Left cardiac atrium (tissue), 4 donors: ENCODE measurements at regions of chr3 and their contacts with region 1.

Region 1: DNA sequence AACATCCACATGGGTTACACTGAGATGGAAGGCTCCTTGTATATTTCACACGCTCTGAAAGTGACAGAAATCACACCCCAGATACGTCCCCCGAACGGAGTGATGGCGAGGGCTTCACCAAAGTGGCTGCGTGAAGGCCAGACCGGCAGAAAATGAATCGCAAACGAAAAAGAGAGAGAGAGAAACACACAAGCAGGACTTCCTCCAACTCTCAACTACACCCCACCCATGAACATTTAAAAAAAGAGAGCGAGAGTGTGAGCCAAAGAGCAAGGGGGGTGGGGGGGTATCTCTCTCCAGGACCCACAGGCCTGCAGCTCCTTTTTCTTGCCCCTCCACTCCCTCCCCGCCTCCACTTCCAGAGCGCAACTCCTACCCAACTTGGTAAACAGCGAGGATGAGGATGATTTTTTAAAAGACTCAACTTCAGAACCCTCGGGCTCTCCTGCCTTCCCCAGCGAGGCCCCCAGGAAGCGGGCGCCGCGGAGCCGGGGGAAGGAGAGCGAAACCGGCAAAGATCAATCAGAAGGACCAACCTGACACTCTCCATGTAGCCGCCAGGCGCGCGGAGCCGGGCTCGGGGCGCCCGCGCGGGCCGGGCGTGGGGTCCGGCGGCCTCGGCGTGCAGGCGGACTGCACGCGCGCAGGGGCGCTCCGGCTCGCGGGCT is 519.1 kb downstream of the FOXP1 start:
- DNase-seq: no peak
- ATAC-seq: peak; percentile 60 to 62

Region 2: GRCh38 chr3:70899816-70900215 is 164.6 kb before region 1 on chr3:
- intact Hi-C with region 1: no loop called
- DNase-seq: no peak
- ATAC-seq: no peak

Region 3: GRCh38 chr3:71130471-71131374 is 66.3 kb after region 1 on chr3:
- intact Hi-C with region 1: loop called in 1 of 2 experiments (anchors 5 kb)
- DNase-seq: peak; percentile 70
- ATAC-seq: peak; percentile 72 to 74

Region 4: DNA sequence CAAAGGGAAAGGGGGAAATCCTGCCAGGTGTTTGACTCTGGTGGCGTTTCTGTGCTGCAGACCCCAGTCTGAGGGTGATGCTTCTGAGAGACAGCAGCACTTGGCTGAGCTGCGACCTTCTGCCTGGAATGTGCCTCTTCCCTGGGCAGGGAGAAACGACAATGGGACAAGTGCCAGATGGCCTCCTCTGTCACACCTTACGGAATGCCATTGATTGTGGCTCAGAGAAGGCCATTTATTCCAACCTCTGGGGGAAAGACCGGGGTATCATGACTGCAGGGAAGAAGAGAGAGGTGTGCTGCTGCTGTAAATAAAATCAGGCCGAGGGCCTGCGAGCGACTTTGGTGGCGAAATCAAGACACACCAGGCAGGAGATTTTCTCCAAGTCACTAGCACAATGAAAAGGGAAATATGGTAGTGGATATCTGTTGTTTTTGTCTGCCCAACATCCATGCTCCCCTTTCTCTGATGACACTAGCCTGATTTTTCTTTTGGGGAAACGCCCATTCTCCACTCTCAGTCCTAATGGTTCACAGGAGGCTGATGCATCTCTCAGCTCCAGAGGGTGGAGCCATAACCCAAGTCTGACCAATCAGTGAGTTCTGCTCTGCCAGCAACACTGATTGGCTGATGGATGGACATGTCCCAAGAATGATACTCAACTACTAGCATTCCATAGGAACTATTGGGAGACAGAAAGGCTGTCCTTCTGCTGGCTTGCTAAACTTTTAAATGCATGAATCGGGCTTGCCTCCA is 183.0 kb after region 1 on chr3:
- intact Hi-C with region 1: loop called in 1 of 2 experiments (anchors 10 kb)
- DNase-seq: peak; percentile 44
- ATAC-seq: peak; percentile 42 to 59

Region 5: DNA sequence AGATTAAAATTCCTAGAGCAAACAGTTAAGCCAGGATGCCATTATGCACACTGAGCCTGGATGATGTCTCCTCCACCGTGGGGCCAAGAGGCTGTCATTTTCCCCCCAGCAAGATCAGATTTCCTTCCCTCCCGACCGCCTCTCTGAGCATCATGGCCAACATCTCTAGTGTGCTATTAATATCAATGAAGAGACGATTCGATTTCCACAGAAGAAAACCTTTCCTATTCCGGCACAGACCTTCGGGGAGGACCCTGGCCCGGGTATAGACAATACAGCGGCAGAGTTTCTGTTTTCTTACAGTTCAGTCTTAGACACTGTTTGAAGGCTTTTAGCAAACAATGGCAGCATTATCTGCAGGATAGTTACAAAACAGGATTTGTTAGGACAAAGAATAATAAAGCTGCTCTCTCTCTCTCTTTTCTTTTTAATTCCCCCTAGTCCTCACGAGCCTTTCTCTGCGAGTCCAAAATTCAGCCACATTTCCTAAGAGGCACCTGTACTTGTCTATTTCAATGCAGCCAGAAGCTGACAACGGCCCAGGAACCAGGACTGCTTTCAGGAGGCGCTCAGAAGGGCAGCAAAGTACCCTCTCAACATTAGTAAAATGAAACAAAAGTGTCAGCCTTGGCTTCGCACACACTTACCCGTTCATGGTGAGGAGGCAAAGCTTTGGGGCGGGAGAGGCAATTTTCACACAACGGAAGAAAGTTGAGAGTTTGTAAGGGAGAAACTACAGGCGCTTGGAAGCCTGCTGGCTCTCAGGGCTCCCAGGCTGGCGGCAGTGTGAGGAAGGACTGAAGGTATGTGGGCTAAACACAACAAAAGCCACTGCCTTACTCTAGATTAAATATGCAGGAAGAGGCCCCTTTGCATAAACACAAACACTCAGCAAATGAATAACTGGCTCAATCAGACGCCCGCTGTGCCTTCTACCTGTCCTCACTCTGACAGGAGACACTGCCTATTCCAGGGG is 241.1 kb after region 1 on chr3:
- intact Hi-C with region 1: loop called in 1 of 2 experiments (anchors 10 kb)
- DNase-seq: peak; percentile 38
- ATAC-seq: peak; percentile 84 to 91